ENCODE measurements at regions of chr17 and their contacts with region 1.

Region 1: DNA sequence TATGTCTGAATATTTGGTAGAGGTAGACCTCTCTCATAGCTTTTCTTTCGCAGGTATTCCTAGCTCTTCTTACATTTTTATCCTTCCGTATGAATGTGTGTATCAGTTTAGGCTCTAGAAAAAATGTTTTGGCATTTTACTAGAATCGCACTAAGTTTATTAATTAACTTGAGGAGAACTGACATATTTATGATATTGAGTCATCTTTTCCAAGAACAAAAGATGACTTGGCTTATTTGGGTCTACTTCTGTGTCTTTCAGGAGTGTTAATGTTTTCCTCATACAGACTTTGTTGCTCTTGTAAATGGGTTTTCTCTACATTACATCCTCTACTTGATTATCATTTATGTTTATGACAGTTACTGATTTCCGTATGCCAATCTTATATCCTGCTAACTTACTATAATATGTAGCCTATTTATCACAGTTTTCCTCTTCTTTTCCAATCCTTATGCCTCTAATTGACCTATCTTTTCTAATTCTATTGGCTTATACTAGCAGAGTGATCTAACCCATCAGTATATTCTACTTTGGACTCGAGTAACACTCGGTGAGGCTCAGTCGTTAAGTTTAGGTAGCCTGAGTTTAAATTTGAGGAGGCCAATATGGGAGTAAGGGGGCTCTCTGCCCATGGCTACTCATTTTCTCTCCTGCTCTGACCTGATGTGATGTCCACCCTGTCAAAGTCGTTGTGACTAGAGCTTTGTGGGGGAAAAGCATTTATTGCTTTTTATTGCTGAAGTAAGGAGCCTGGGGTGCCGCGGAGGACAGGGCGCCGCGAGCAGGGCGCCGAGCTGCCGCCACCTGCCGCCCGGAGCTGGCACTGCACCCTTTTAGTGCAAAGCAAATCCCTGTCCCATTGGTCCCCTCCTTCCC is 20.0 kb downstream of the ST6GALNAC1 start:
- DNase-seq: peak; percentile 74 to 91
- ATAC-seq: peak; percentile 85 to 96
- H3K4me3 ChIP-seq: peak overlapping the region; percentile 3; the same call in 1 of the 3 replicates
- H3K27ac ChIP-seq: peak overlapping the region; percentile 59 to 77; a peak in 5 of 6 replicates
- H3K4me1 ChIP-seq: peaks cover 11% of the 10 kb centered on the region
- CTCF ChIP-seq: peak; percentile 98
- EP300 ChIP-seq: no peak
- POLR2A ChIP-seq: no peak
- RAD21 ChIP-seq: peak; percentile 83 to 90

Region 2: GRCh38 chr17:76327696-76328095 is 295.8 kb before region 1 on chr17:
- CTCF ChIA-PET with region 1: no interaction called
- POLR2A ChIA-PET with region 1: no interaction called
- DNase-seq: no peak
- ATAC-seq: no peak
- H3K4me3 ChIP-seq: no peak overlapping the region
- H3K27ac ChIP-seq: no peak overlapping the region
- H3K4me1 ChIP-seq: no peaks in the 10 kb centered on the region
- CTCF ChIP-seq: no peak
- EP300 ChIP-seq: no peak
- POLR2A ChIP-seq: no peak
- RAD21 ChIP-seq: no peak

Region 3: GRCh38 chr17:76532072-76532651 is 91.3 kb before region 1 on chr17:
- CTCF ChIA-PET with region 1: interaction called, 38 read pairs
- POLR2A ChIA-PET with region 1: no interaction called
- DNase-seq: no peak
- ATAC-seq: no peak
- H3K4me3 ChIP-seq: no peak overlapping the region
- H3K27ac ChIP-seq: peak overlapping the region in 1 of 2 experiments; percentile 8; a peak in 1 of 6 replicates
- H3K4me1 ChIP-seq: peaks cover 13% of the 10 kb centered on the region
- CTCF ChIP-seq: no peak
- EP300 ChIP-seq: no peak
- POLR2A ChIP-seq: no peak
- RAD21 ChIP-seq: no peak

Region 4: GRCh38 chr17:76557368-76558197 is 65.9 kb before region 1 on chr17:
- CTCF ChIA-PET with region 1: interaction called, 105 read pairs
- POLR2A ChIA-PET with region 1: interaction called, 18 read pairs
- DNase-seq: peak; percentile 84 to 99
- ATAC-seq: peak; percentile 96
- H3K4me3 ChIP-seq: peak overlapping the region; percentile 87
- H3K27ac ChIP-seq: peak overlapping the region; percentile 90 to 96
- H3K4me1 ChIP-seq: peaks cover 39% of the 10 kb centered on the region
- CTCF ChIP-seq: peak; percentile 54
- EP300 ChIP-seq: no peak
- POLR2A ChIP-seq: peak; percentile 99
- RAD21 ChIP-seq: no peak; a peak in 1 of 5 replicates

Region 5: DNA sequence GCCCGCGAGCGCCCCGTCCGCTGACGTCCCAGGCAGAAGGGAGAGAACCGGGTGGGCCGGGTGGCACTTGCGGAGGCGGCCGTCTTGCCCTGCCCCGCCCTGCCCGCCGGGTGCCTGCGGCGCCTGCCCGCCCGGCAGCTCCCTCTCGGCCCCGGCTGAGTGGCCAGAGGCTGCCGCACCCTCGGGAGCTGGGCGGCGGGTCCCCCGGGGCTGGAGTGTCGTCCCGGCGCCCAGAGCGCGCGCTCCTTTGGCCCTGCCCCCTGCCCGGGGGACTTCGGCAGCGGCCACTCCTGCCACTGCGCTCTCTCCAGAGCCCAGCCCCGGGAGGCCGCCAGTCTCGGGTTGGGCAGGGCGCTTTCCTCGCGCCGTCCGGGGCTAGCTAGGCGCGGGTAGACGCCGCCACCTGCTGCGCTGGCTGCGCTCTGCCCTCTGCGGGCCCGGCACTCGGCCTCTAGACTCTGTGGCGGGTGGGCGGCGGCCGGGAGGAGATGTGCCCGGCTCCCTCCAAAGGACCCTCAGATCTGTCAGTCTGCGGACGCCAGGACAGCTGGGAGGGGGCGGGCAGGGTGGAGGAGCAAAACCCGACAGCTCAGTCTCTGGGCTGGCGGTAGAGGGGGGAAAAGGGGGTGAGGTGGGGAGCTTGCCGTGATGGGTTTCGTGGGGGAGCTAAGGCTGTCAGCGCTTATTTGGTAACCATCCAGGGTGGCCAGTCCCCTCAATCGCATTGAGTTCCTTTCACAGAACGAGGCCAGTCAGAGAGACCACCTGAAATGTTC is 37.5 kb before region 1 on chr17 and contains the start of gene ST6GALNAC2:
- CTCF ChIA-PET with region 1: interaction called, 25 read pairs
- POLR2A ChIA-PET with region 1: no interaction called
- DNase-seq: peak; percentile 59 to 70
- ATAC-seq: peak; percentile 84 to 92
- H3K4me3 ChIP-seq: peak within 1 kb of the TSS; percentile 64
- H3K27ac ChIP-seq: peak within 1 kb of the TSS; percentile 76 to 89
- H3K4me1 ChIP-seq: 0 out of 3 replicates have a peak, but pooled peaks cover 3% of the 10 kb centered on the region
- CTCF ChIP-seq: peak; percentile 25; the same call in 2 of the 3 replicates
- EP300 ChIP-seq: no peak
- POLR2A ChIP-seq: no peak
- RAD21 ChIP-seq: peak; percentile 33 to 59; a peak in 4 of 5 replicates
- polyA plus RNA-seq, gene ST6GALNAC2: 0.74 and 0.78 TPM in 2 replicates

Region 6: GRCh38 chr17:76641501-76641900 is 18.0 kb after region 1 on chr17:
- CTCF ChIA-PET with region 1: interaction called, 60 read pairs
- POLR2A ChIA-PET with region 1: no interaction called
- DNase-seq: peak; percentile 71 to 92
- ATAC-seq: peak; percentile 68 to 69; a peak in 5 of 6 replicates
- H3K4me3 ChIP-seq: no peak overlapping the region
- H3K27ac ChIP-seq: peak overlapping the region; percentile 62 to 78; a peak in 5 of 6 replicates
- H3K4me1 ChIP-seq: peaks cover 41% of the 10 kb centered on the region
- CTCF ChIP-seq: no peak
- EP300 ChIP-seq: peak; percentile 63 to 83; a peak in 3 of 5 replicates
- POLR2A ChIP-seq: no peak
- RAD21 ChIP-seq: no peak

Region 7: DNA sequence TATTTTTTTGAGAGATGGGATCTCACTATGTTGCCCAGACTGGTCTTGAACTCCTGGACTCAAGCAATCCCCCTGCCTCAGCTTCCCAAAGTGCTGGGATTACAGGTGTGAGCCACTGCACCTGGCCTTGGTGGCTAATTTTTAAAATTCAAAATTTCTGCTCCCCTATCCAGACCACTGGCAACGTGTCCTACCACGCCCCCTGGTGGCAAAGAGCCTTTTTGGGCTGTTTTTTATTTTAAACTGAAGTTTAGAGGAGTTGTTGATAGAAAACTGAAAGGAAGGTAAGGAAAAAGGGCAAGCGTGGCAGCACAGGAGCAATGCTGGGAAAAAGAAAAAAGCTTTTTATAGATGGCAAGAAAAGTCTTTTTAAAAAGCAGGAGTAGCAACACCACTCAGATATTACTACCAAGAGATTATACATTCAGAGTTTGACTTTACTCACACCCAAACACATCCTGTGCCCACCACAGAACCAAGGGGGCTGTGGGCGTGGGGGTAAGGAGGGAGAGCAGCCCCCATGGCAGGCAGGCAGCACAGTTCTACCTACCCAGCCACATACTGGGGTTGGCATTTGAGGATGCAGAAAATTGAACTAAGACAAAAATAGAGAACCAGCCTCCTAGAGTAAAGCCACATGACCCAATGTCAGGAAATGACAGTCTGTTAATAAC is 91.5 kb after region 1 on chr17:
- CTCF ChIA-PET with region 1: interaction called, 22 read pairs
- POLR2A ChIA-PET with region 1: no interaction called
- DNase-seq: peak in 1 of 2 experiments; percentile 57
- ATAC-seq: peak in 1 of 2 experiments; percentile 48; a peak in 3 of 6 replicates
- H3K4me3 ChIP-seq: no peak overlapping the region
- H3K27ac ChIP-seq: no peak overlapping the region
- H3K4me1 ChIP-seq: peaks cover 12% of the 10 kb centered on the region
- CTCF ChIP-seq: peak; percentile 97
- EP300 ChIP-seq: no peak
- POLR2A ChIP-seq: no peak
- RAD21 ChIP-seq: peak; percentile 77